PC-9 (cell line): ENCODE measurements at regions of chr16 and their contacts with region 1.

Region 1: DNA sequence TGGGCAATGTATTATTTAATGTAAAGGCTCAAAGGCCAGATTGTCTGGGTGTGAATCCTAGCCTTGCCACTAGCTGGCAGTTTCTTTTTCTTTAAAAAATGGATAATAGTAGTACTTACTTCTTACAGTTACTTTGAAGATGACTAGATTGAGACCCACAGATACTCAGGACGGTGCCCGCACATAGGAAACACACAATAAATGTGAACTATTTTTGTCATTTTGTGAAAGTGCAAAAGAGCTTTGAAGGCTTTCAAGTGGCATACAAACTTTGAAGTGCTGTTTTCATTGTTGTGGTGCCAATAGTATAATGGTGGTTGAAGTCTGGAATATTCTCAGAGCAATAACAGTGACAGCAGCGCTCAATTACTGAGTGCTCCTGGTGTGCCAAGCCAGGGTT is 63.6 kb downstream of the OTOA start:
- DNase-seq: no peak
- H3K4me3 ChIP-seq: no peak overlapping the region
- H3K27ac ChIP-seq: no peak overlapping the region
- H3K4me1 ChIP-seq: no peaks in the 10 kb centered on the region
- H3K27me3 ChIP-seq: no peaks in the 10 kb centered on the region
- CTCF ChIP-seq: no peak; the same call in 1 of the 2 replicates

Region 2: GRCh38 chr16:21646721-21647561 is 80.4 kb before region 1 on chr16:
- CTCF ChIA-PET with region 1: no interaction called
- POLR2A ChIA-PET with region 1: interaction called, 12 read pairs
- intact Hi-C with region 1: no loop called
- DNase-seq: no peak
- H3K4me3 ChIP-seq: no peak overlapping the region
- H3K27ac ChIP-seq: no peak overlapping the region
- H3K4me1 ChIP-seq: no peaks in the 10 kb centered on the region
- H3K27me3 ChIP-seq: no peaks in the 10 kb centered on the region
- CTCF ChIP-seq: no peak